Activated CD4-positive, alpha-beta T cell treated with anti-CD3 and anti-CD28 coated beads for 36 hours (primary cell): ENCODE measurements at regions of chr3 and their contacts with region 1.

Region 1: GRCh38 chr3:19931180-19931692 is 2.8 kb downstream of the EFHB start:
- DNase-seq: peak; percentile 71
- ATAC-seq: peak; percentile 82
- H3K4me3 Mint-ChIP-seq: peak overlapping the region; percentile 21
- H3K27ac Mint-ChIP-seq: peak overlapping the region; percentile 83
- H3K4me1 Mint-ChIP-seq: peaks cover 32% of the 10 kb centered on the region
- H3K27me3 Mint-ChIP-seq: peaks cover 12% of the 10 kb centered on the region

Region 2: GRCh38 chr3:19866751-19867347 is 64.4 kb before region 1 on chr3:
- CTCF ChIA-PET with region 1: no interaction called
- POLR2A ChIA-PET with region 1: no interaction called
- intact Hi-C with region 1: no loop called
- DNase-seq: peak; percentile 54
- ATAC-seq: peak; percentile 68
- H3K4me3 Mint-ChIP-seq: no peak overlapping the region
- H3K27ac Mint-ChIP-seq: no peak overlapping the region
- H3K4me1 Mint-ChIP-seq: peaks cover 3% of the 10 kb centered on the region
- H3K27me3 Mint-ChIP-seq: peaks cover 11% of the 10 kb centered on the region

Region 3: DNA sequence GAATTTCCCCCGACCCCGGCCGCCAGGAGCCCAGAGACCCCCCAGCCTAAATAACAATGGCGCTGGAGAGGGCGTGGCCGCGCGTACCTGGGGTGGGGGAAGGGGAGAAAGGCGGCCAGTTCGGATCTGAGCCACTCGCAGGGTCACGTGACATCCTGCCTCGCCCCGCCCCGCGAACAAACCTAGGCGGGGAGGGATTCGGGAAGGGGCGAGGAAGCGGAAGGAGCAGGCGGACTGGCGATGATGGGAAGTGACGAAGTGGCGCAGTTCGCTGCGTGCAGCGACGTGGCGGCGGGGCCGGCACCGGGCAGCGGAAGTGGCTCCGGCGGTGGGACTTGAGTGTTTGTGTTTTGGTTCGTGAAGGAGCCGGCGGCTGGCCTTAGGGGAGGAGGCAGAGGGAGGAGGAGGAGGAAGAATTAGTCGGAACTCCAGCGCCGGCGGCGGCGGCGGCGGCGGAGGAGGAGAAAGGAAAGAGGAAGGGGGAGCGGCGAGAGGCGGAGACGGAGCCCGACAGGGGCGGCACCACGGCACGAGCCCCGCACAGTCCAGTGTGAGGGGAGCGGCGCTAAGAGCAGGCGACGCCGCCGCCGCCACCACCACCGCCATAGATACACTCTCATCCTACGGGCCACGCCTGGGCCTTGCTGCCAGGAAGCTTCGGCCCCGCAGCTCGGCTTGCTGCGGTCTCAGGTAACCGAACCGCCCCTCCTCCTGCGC is 15.8 kb after region 1 on chr3 and contains the start of gene RAB5A:
- CTCF ChIA-PET with region 1: interaction called, 3 read pairs
- POLR2A ChIA-PET with region 1: interaction called, 4 read pairs
- intact Hi-C with region 1: loop called (anchors 1 kb)
- DNase-seq: peak; percentile 99
- ATAC-seq: peak; percentile 90
- H3K4me3 Mint-ChIP-seq: peak within 1 kb of the TSS; percentile 96
- H3K27ac Mint-ChIP-seq: peak within 1 kb of the TSS; percentile 99
- H3K4me1 Mint-ChIP-seq: peaks cover 40% of the 10 kb centered on the region
- H3K27me3 Mint-ChIP-seq: no peaks in the 10 kb centered on the region
- total RNA-seq, gene RAB5A: 54.2 to 78.8 TPM

Region 4: DNA sequence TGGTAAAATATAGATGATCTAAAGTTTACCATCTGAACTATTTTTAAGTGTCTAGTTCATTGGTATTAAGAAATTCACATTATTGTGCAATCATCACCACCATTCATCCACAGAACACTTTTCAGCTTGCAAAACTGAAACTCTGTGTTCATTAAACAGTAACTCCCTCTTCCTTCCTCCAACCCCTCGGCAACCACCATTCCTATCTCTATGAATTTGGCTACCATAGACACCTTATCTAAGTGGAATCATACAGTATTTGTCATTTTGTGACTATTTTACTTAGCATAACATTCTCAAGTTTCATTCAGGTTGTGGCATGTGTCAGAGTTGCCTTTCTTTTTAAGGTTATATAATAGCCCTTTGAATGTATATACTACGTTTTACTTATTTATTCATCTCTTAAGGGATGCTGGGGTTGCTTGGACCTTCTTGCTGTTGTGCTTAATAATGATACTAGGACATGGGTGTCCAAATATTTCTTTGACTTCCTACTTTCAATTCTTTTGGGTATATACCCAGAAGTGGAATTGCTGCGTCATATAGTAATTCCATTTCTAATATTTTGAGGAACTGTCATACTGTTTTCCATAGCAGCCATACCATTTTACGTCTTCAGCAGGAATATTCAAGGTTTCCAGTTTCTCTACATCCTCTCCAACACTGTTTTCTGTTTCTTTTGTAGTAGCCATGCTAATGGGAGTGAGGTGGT is 129.9 kb after region 1 on chr3:
- CTCF ChIA-PET with region 1: no interaction called
- POLR2A ChIA-PET with region 1: interaction called, 3 read pairs
- intact Hi-C with region 1: loop called in 1 of 2 experiments (anchors 1 kb)
- DNase-seq: peak; percentile 48
- ATAC-seq: peak; percentile 61
- H3K4me3 Mint-ChIP-seq: no peak overlapping the region
- H3K27ac Mint-ChIP-seq: peak overlapping the region; percentile 12
- H3K4me1 Mint-ChIP-seq: peaks cover 40% of the 10 kb centered on the region
- H3K27me3 Mint-ChIP-seq: no peaks in the 10 kb centered on the region

Region 5: DNA sequence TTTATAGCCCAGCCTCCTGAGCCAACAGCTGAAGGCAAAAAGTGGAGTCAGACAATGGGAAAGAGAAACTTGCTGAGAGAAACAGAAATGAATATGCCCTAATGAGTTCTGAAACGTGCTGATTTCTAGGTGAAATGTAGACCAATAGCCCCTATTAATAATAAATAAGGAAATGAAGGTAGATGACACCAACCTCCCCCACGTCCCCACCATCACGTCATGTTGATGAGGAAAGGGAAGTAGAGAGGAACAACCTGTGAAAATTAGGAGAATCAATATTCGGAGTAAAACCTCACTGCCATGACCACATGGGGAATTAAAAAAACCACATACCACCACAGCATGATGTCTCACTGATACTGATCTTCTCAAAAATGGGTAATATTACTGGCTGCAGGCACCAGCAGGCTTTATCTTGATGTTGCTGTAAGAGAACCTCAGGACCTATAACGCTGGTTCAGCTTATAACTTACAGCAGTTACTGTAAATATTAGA is 173.0 kb after region 1 on chr3:
- CTCF ChIA-PET with region 1: no interaction called
- POLR2A ChIA-PET with region 1: no interaction called
- intact Hi-C with region 1: loop called in 1 of 2 experiments (anchors 5 kb)
- DNase-seq: peak; percentile 39
- ATAC-seq: peak; percentile 78
- H3K4me3 Mint-ChIP-seq: peak overlapping the region; percentile 26
- H3K27ac Mint-ChIP-seq: peak overlapping the region; percentile 84
- H3K4me1 Mint-ChIP-seq: peaks cover 27% of the 10 kb centered on the region
- H3K27me3 Mint-ChIP-seq: no peaks in the 10 kb centered on the region